HEK293T (cell line): ENCODE measurements at regions of chr6 and their contacts with region 1.

Region 1: GRCh38 chr6:5995949-5996713 is 10.6 kb downstream of the NRN1 start:
- DNase-seq: peak; percentile 80

Region 2: GRCh38 chr6:4698901-4699659 is 1297.1 kb before region 1 on chr6:
- CTCF ChIA-PET with region 1: no interaction called
- POLR2A ChIA-PET with region 1: no interaction called
- DNase-seq: no peak

Region 3: GRCh38 chr6:6007366-6008088 is 11.4 kb after region 1 on chr6:
- CTCF ChIA-PET with region 1: interaction called, 5 read pairs
- POLR2A ChIA-PET with region 1: interaction called, 12 read pairs
- DNase-seq: peak; percentile 36